HCT116 (cell line): ENCODE measurements at regions of chr3 and their contacts with region 1.

Region 1: DNA sequence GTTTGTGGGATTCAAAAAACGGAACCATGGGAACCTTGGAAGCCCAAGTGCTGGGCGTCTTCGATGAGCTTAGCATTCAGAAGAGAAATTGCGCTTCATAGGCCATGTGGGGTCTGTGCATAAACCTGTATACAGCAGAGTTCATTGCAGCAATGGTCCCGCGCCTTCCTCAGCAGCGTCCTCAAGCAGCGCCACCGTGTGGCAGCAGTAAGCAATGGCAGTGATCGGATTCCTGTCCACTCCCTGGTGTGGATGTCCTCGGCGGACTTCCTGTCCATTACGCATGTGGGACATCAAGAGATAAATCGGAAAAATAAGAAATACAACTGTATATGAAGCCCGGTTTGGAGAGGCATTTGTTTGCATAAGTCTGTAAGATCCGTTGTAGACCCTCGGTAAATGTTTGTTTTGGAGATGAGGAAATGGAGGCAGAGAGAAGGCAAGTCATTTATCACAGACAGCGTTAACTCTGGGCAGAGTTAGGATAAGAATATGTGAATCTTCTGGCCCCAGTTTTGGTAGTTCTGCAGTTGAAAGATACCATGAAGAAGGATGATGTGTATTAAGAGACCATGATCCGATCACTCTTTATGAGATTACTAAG is 57.7 kb downstream of the CNTN4 start:
- DNase-seq: no peak
- ATAC-seq: no peak
- H3K4me3 ChIP-seq: no peak overlapping the region
- H3K27ac ChIP-seq: no peak overlapping the region
- H3K4me1 ChIP-seq: no peaks in the 10 kb centered on the region
- H3K27me3 ChIP-seq: no peaks in the 10 kb centered on the region
- CTCF ChIP-seq: peak in 2 of 3 experiments; percentile 32 to 44; a peak in 4 of 6 replicates
- POLR2A ChIP-seq: no peak
- RAD21 ChIP-seq: no peak

Region 2: DNA sequence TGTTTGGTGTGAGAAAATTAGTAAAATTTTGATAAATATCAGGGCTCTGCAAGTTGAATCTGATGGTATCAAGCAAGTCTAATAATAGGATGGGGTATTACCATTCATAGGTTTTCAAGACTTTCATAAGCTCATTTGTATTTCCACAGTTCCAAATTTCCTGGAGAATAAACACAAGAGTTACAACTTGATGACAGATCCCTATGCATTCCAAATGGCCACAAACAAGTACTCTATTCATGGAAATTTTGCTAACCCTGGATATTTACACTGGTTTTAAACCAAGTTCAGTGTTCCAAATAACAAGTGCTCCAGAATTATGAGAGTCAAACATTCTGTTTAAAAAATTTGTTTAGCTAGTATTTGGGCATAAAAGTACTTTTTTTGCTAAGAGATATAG is 1138.5 kb before region 1 on chr3:
- CTCF ChIA-PET with region 1: no interaction called
- POLR2A ChIA-PET with region 1: no interaction called
- RAD21 ChIA-PET with region 1: no interaction called
- intact Hi-C with region 1: no loop called
- DNase-seq: no peak
- ATAC-seq: no peak
- H3K4me3 ChIP-seq: no peak overlapping the region
- H3K27ac ChIP-seq: no peak overlapping the region
- H3K4me1 ChIP-seq: no peaks in the 10 kb centered on the region
- H3K27me3 ChIP-seq: no peaks in the 10 kb centered on the region
- CTCF ChIP-seq: no peak
- POLR2A ChIP-seq: no peak
- RAD21 ChIP-seq: no peak

Region 3: GRCh38 chr3:2656806-2657777 is 500.7 kb after region 1 on chr3:
- CTCF ChIA-PET with region 1: no interaction called
- POLR2A ChIA-PET with region 1: no interaction called
- RAD21 ChIA-PET with region 1: no interaction called
- intact Hi-C with region 1: no loop called
- DNase-seq: no peak
- ATAC-seq: no peak
- H3K4me3 ChIP-seq: no peak overlapping the region
- H3K27ac ChIP-seq: no peak overlapping the region
- H3K4me1 ChIP-seq: no peaks in the 10 kb centered on the region
- H3K27me3 ChIP-seq: no peaks in the 10 kb centered on the region
- CTCF ChIP-seq: no peak
- POLR2A ChIP-seq: no peak
- RAD21 ChIP-seq: no peak

Region 4: DNA sequence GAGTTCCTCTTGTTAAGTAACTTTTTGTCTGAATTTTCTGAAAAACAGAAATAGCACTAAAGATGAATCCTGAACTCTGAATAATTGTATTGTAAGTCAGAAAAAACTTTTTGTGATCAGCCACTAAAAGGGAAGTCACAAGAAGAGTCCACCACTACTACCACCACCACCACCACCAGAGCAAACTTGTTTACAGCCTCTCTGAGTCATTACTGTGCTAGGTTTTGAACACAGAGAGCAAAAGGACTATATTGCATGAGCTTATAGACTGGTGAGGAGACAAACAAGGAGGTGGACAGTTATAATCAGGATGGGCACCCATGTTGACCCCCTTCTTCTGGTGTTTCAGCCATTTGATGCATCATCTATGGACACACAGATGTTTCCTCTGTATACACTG is 812.1 kb after region 1 on chr3:
- CTCF ChIA-PET with region 1: no interaction called
- POLR2A ChIA-PET with region 1: no interaction called
- RAD21 ChIA-PET with region 1: no interaction called
- intact Hi-C with region 1: loop called (anchors 5 kb)
- DNase-seq: no peak
- ATAC-seq: no peak
- H3K4me3 ChIP-seq: no peak overlapping the region
- H3K27ac ChIP-seq: no peak overlapping the region
- H3K4me1 ChIP-seq: no peaks in the 10 kb centered on the region
- H3K27me3 ChIP-seq: no peaks in the 10 kb centered on the region
- CTCF ChIP-seq: no peak
- POLR2A ChIP-seq: no peak
- RAD21 ChIP-seq: no peak